Transverse colon (tissue), 4 donors: ENCODE measurements at regions of chr10 and their contacts with region 1.

Region 1: GRCh38 chr10:122565728-122566206 is 5.2 kb downstream of the DMBT1 start:
- DNase-seq: peak; percentile 83
- H3K4me3 ChIP-seq: peak overlapping the region in 1 of 4 donors; percentile 7
- H3K27ac ChIP-seq: no peak overlapping the region
- H3K4me1 ChIP-seq: peaks cover 0 to 12% (median 2%) of the 10 kb centered on the region in 4 donors
- H3K27me3 ChIP-seq: peaks cover 8% of the 10 kb centered on the region
- CTCF ChIP-seq: peak; percentile 78 to 87 (median 81)
- EP300 ChIP-seq: no peak
- POLR2A ChIP-seq: no peak

Region 2: DNA sequence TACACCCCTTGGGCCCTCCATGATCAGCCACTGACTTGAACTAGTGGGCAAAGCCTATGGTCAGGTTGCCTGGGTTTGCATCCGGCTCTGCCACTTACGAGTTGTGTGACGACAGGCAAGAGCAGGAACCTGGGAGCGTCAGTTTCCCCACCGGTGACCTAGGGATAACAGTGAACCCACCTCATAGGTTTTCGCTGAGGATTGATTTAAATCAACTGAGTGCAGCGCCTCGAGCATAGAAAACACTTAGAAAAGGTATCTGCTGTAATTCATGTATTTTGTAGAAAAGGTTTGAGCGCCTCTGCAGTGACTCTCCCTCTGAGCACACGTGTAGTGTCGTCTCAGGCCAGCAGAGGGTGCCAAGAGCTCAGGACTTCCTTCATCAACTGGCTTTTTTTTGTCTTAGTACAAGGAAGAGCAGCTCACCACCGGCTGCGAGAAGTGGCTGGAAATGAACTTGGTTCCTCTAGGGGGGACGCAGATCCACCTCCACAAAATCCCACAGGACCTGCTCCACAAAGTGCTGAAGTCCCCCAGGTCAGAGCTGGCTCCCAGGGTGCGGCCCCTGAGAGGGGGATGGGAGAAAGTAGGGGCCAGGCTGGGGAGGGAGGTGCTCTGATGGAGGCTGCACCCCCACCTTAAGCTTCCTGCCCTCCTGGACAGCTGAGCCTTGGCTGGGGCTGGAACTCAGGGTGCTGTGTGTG is 267.0 kb before region 1 on chr10:
- in situ Hi-C with region 1: loop called (anchors 10 to 25 kb)
- intact Hi-C with region 1: loop called (anchors 5 kb)
- DNase-seq: peak; percentile 76
- H3K4me3 ChIP-seq: peak overlapping the region in 1 of 4 donors; percentile 25
- H3K27ac ChIP-seq: no peak overlapping the region
- H3K4me1 ChIP-seq: peaks cover 0 to 4% (median 0%) of the 10 kb centered on the region in 4 donors
- H3K27me3 ChIP-seq: no peaks in the 10 kb centered on the region
- CTCF ChIP-seq: peak; percentile 88 to 95 (median 93)
- EP300 ChIP-seq: no peak
- POLR2A ChIP-seq: no peak

Region 3: DNA sequence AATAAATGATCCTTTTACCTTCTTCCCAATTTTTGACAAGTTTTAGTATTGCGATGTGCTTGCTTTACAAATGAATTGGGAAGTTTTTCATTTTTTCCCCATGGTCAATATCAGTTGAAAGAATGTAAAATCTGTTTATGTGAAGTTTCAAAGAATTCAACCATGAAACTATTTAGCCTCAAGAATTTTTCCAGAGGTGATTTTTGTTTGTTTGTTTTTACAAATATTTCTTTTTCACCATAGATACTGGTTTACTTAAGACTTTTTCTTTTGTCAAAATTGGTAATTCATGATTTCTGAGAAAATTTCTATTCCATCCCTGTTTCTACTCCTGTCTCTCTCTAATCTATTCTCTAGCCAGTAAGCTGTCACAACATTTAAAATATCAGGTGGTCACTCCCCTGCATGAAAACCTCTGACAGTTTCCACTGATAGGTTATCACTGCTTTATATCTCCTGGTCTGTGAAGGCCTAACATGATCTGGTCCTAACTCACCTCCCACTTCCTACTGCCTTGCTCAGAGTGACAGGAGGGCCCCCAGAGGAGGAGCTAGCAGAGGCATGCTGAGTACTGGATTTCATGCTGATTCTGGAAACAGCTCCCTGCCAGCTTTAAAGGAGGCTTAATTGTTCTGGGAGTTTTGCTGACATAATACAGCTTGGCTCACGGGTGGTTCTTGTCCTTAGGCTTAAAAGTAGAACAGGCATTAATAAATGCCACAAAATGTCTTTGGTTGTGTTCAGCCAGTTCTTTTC is 118.9 kb before region 1 on chr10:
- in situ Hi-C with region 1: loop called in 1 of 4 experiments (anchors 10 kb)
- intact Hi-C with region 1: loop called (anchors 5 kb)
- DNase-seq: no peak
- H3K4me3 ChIP-seq: no peak overlapping the region
- H3K27ac ChIP-seq: no peak overlapping the region
- H3K4me1 ChIP-seq: no peaks in the 10 kb centered on the region
- H3K27me3 ChIP-seq: no peaks in the 10 kb centered on the region
- CTCF ChIP-seq: no peak
- EP300 ChIP-seq: no peak
- POLR2A ChIP-seq: no peak

Region 4: DNA sequence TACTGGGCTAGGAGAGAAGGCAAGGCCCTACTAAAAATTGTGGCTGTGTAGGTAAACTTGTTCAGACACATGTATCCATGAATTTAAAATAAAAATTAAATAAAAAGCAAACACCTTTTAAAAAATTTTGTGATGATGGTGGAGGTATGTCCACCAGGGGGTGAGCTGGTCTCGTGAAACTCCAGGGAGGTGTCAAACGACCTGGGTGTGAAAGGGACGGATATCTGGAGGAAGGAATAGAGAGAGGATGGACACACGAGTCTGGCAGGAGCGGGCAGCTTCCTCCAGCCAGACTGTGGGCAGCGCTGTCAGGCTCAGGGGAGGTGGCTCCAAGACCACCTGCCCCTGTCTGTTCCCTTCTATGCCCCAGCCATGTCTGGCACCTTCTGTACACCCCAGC is 40.0 kb before region 1 on chr10:
- in situ Hi-C with region 1: loop called in 1 of 4 experiments (anchors 5 kb)
- intact Hi-C with region 1: no loop called
- DNase-seq: peak; percentile 60
- H3K4me3 ChIP-seq: no peak overlapping the region
- H3K27ac ChIP-seq: no peak overlapping the region
- H3K4me1 ChIP-seq: peaks cover 0 to 4% (median 1%) of the 10 kb centered on the region in 4 donors
- H3K27me3 ChIP-seq: no peaks in the 10 kb centered on the region
- CTCF ChIP-seq: peak; percentile 31 to 82 (median 51)
- EP300 ChIP-seq: no peak
- POLR2A ChIP-seq: no peak